ENCODE measurements at regions of chr7 and their contacts with region 1.

Region 1: GRCh38 chr7:156935250-156935649 is 14.3 kb upstream of the NOM1 start:
- DNase-seq: no peak

Region 2: GRCh38 chr7:156918635-156919034 is 16.6 kb before region 1 on chr7:
- intact Hi-C with region 1: loop called in 1 of 2 experiments (anchors 1 kb)
- DNase-seq: no peak

Region 3: DNA sequence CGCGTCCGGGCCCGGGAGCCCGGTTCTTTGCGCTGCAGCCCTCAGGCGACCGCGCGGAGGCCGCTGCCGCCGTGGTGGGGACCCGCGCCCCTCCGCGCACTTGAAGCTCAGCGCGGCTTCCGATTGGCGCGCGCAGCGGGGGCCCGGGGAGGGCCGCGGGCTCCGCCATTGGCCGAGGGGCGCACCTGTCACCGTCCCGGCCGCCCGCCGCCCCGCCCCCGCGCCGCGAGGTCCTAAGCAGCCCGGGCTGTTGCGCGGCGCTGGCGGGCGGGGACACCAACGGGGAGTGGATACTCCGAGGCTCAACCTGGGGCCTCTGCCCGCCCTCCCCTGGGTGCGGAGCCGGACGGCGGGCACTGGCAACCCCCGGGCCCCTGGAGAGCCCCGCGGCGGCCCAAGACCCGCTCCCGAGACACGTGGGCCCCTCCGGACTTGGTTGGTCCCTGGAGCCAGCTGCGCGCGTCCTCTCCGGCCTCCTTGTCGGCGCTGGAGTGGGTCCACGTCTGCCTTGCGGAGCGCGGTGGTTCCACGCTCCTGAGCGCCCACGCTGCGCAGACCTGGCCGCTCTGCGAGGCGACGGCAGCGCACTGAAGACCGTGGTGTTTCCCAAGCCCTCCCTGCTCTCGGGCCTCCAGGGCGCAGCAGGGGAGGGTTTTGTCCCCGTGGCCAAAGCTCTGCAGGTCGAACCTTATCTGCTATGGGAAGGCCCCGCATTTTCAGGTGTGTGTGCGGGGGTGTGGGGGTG is 75.5 kb after region 1 on chr7 and contains the start of gene MNX1:
- intact Hi-C with region 1: no loop called
- DNase-seq: no peak
- total RNA-seq, gene MNX1: not detected

Region 4: GRCh38 chr7:157738066-157738460 is 802.8 kb after region 1 on chr7:
- intact Hi-C with region 1: no loop called
- DNase-seq: no peak

Measured in posterior vena cava (tissue), 2 donors.